CD4-positive, alpha-beta memory T cell (primary cell): ENCODE measurements at regions of chr14 and their contacts with region 1.

Region 1: DNA sequence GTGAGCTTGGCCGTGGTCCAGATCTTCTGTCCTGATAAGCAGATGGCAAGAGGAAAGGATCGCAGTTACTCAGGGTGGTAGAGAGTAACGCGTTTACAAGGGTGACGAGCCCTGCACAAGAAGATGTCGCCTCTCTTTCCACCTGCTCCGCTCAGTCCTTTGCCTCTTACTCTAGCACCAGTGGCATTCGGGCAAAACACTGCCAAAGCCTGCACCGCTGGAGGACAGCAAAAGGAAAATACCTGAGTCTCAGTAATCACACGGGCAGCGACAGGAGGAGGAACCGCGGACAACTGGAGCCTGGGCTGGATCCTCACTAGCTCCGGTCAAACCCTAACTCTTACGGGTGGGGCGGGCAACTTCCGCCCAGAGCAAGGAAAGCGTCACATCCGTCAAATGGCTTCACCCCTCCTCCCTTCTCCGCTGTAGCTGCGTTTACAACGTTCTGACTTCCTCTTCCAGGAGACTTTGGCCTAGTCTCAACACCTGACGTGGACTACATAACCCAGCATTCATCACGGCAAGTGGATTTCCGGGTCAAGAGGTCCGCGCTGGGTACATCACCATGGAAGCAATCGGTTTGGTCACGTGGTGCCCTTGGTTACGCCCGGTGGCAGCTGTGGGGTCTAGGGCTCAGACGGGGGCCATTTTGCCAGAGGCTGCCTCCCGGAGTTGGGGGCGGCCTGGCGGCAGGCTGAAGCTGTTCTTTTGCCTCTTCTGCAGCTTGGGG is at the starts of genes KLHL28 and TOGARAM1:
- DNase-seq: peak; percentile 94 to 100 (median 98)
- H3K4me3 ChIP-seq: peak within 1 kb of the TSS; percentile 88 to 93
- H3K4me3 Mint-ChIP-seq: no peak within 1 kb of the TSS
- H3K27ac ChIP-seq: peak within 1 kb of the TSS; percentile 92
- H3K27ac Mint-ChIP-seq: peak within 1 kb of the TSS in 1 of 7 donors; percentile 83
- H3K4me1 ChIP-seq: peaks cover 74% of the 10 kb centered on the region
- H3K4me1 Mint-ChIP-seq: peaks cover 42 to 51% (median 45%) of the 10 kb centered on the region in 4 donors
- H3K27me3 ChIP-seq: no peaks in the 10 kb centered on the region
- H3K27me3 Mint-ChIP-seq: no peaks in the 10 kb centered on the region
- total RNA-seq, gene KLHL28: 38.4 to 40.6 TPM
- total RNA-seq, gene TOGARAM1: 11.3 to 11.5 TPM

Region 2: GRCh38 chr14:44897045-44897844 is 64.5 kb before region 1 on chr14:
- CTCF ChIA-PET with region 1: interaction called, 10 read pairs
- POLR2A ChIA-PET with region 1: interaction called, 67 read pairs
- intact Hi-C with region 1: loop called (anchors 1 kb)
- DNase-seq: peak; percentile 91 to 99 (median 93)
- H3K4me3 ChIP-seq: peak overlapping the region; percentile 30 to 74
- H3K4me3 Mint-ChIP-seq: peak overlapping the region; percentile 91 to 98 (median 94)
- H3K27ac ChIP-seq: peak overlapping the region; percentile 90
- H3K27ac Mint-ChIP-seq: peak overlapping the region; percentile 83 to 99 (median 98)
- H3K4me1 ChIP-seq: peaks cover 22% of the 10 kb centered on the region
- H3K4me1 Mint-ChIP-seq: peaks cover 14 to 27% (median 21%) of the 10 kb centered on the region in 4 donors
- H3K27me3 ChIP-seq: no peaks in the 10 kb centered on the region
- H3K27me3 Mint-ChIP-seq: no peaks in the 10 kb centered on the region

Region 3: GRCh38 chr14:44951051-44951450 is 10.7 kb before region 1 on chr14:
- CTCF ChIA-PET with region 1: no interaction called
- POLR2A ChIA-PET with region 1: interaction called, 20 read pairs
- intact Hi-C with region 1: no loop called
- DNase-seq: no peak
- H3K4me3 ChIP-seq: no peak overlapping the region
- H3K4me3 Mint-ChIP-seq: peak overlapping the region in 1 of 8 donors; percentile 24
- H3K27ac ChIP-seq: no peak overlapping the region
- H3K27ac Mint-ChIP-seq: peak overlapping the region in 1 of 7 donors; percentile 58
- H3K4me1 ChIP-seq: peaks cover 25% of the 10 kb centered on the region
- H3K4me1 Mint-ChIP-seq: peaks cover 33 to 60% (median 48%) of the 10 kb centered on the region in 4 donors
- H3K27me3 ChIP-seq: no peaks in the 10 kb centered on the region
- H3K27me3 Mint-ChIP-seq: no peaks in the 10 kb centered on the region

Region 4: GRCh38 chr14:45003924-45004323 is 42.2 kb after region 1 on chr14:
- CTCF ChIA-PET with region 1: no interaction called
- POLR2A ChIA-PET with region 1: no interaction called
- intact Hi-C with region 1: no loop called
- DNase-seq: no peak
- H3K4me3 ChIP-seq: no peak overlapping the region
- H3K4me3 Mint-ChIP-seq: no peak overlapping the region
- H3K27ac ChIP-seq: no peak overlapping the region
- H3K27ac Mint-ChIP-seq: no peak overlapping the region
- H3K4me1 ChIP-seq: no peaks in the 10 kb centered on the region
- H3K4me1 Mint-ChIP-seq: no peaks in the 10 kb centered on the region
- H3K27me3 ChIP-seq: no peaks in the 10 kb centered on the region
- H3K27me3 Mint-ChIP-seq: no peaks in the 10 kb centered on the region

Region 5: DNA sequence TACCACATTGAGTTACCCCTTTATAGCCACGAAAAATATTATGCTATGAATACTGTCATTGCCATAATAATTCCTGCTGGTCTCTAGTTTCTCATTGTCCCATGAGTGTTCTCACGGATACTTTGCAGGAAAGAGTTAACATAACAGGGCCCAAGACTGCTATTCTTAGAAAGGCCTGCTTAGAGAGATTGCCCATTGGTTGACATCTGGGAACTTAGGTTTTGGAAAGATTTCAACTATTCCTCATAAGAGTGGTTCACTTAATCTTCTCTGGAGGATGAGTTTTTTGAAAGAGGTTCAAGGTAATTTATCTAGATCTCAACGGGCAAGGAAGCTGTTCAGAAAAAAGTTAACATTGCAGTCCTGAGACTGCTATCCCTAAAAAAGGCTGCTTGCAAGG is 103.8 kb after region 1 on chr14:
- CTCF ChIA-PET with region 1: no interaction called
- POLR2A ChIA-PET with region 1: no interaction called
- intact Hi-C with region 1: no loop called
- DNase-seq: no peak
- H3K4me3 ChIP-seq: no peak overlapping the region
- H3K4me3 Mint-ChIP-seq: no peak overlapping the region
- H3K27ac ChIP-seq: no peak overlapping the region
- H3K27ac Mint-ChIP-seq: no peak overlapping the region
- H3K4me1 ChIP-seq: no peaks in the 10 kb centered on the region
- H3K4me1 Mint-ChIP-seq: no peaks in the 10 kb centered on the region
- H3K27me3 ChIP-seq: no peaks in the 10 kb centered on the region
- H3K27me3 Mint-ChIP-seq: no peaks in the 10 kb centered on the region

Region 6: DNA sequence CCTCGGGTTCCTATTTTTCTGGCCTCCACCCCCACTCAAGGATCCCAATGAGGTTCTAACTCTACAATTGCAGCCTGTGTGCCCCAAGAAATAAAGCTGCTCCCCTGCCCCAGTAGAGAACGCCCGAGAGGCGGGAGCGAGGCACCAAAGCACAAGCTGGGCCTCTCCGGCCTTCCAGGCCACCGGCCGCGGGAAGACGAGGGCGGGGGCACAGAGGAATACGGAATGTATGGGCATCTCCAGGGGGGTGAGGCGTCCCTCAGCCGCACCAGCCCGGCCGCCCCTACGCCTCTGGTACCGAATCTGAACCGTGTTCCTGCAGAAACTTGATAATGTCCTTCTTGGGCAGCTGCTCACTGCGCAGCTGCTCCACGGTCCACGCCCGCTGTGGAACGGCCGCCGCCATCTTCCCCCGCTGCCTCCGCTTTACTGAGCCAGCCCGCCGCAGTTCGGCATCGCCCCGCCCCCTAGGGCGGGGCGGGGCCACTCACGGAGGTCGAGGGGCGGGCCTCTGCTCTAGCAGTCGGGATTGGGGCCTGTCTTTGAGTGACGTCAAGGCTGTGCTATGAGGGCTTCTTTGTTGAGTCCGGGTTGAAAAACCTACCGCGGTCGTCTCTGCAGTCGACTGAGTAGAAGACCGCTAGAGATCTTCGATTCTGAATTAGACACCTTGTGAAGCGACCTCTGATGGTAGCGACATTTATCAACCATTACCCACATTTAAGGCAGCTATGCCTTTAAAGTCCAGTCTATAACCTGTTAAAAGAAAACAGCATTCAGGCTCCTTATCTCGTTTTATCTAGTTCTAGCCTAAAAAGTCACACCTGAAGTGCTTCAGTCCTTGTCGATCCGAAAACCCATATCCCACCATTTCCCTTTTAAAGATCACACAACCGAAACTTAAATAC is 172.5 kb after region 1 on chr14 and contains the start of gene FKBP3:
- CTCF ChIA-PET with region 1: interaction called, 4 read pairs
- POLR2A ChIA-PET with region 1: interaction called, 77 read pairs
- intact Hi-C with region 1: loop called (anchors 1 kb)
- DNase-seq: peak; percentile 90 to 99 (median 96)
- H3K4me3 ChIP-seq: peak within 1 kb of the TSS; percentile 91 to 97
- H3K4me3 Mint-ChIP-seq: peak within 1 kb of the TSS; percentile 89 to 100 (median 98)
- H3K27ac ChIP-seq: peak within 1 kb of the TSS; percentile 91
- H3K27ac Mint-ChIP-seq: peak within 1 kb of the TSS; percentile 91 to 99 (median 97)
- H3K4me1 ChIP-seq: peaks cover 44% of the 10 kb centered on the region
- H3K4me1 Mint-ChIP-seq: peaks cover 26 to 62% (median 45%) of the 10 kb centered on the region in 4 donors
- H3K27me3 ChIP-seq: no peaks in the 10 kb centered on the region
- H3K27me3 Mint-ChIP-seq: no peaks in the 10 kb centered on the region
- total RNA-seq, gene FKBP3: 57.0 to 64.7 TPM

Region 7: DNA sequence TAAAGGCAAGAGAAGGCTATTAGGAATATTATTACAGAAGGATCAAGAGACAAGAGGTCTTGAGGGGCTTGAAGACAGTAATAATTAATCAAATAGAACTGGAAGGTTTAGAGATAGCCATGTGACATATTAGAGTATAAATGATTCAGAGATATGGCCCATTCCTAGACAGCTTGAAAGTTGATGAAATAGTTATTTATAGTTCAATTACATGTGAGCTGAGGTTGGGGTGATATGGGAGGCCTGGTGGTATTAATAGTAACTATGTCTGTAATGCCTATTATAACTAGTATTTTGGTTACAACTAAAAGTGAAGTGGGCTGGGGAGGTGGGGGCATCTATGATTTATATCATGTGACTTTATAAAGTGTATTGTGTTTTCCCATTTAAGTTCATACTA is 305.3 kb after region 1 on chr14:
- CTCF ChIA-PET with region 1: no interaction called
- POLR2A ChIA-PET with region 1: no interaction called
- intact Hi-C with region 1: loop called (anchors 5 kb)
- DNase-seq: no peak
- H3K4me3 ChIP-seq: no peak overlapping the region
- H3K4me3 Mint-ChIP-seq: no peak overlapping the region
- H3K27ac ChIP-seq: no peak overlapping the region
- H3K27ac Mint-ChIP-seq: no peak overlapping the region
- H3K4me1 ChIP-seq: no peaks in the 10 kb centered on the region
- H3K4me1 Mint-ChIP-seq: no peaks in the 10 kb centered on the region
- H3K27me3 ChIP-seq: no peaks in the 10 kb centered on the region
- H3K27me3 Mint-ChIP-seq: peaks cover 4 to 10% of the 10 kb centered on the region in 2 donors